ENCODE measurements at regions of chr10 and their contacts with region 1.

Region 1: DNA sequence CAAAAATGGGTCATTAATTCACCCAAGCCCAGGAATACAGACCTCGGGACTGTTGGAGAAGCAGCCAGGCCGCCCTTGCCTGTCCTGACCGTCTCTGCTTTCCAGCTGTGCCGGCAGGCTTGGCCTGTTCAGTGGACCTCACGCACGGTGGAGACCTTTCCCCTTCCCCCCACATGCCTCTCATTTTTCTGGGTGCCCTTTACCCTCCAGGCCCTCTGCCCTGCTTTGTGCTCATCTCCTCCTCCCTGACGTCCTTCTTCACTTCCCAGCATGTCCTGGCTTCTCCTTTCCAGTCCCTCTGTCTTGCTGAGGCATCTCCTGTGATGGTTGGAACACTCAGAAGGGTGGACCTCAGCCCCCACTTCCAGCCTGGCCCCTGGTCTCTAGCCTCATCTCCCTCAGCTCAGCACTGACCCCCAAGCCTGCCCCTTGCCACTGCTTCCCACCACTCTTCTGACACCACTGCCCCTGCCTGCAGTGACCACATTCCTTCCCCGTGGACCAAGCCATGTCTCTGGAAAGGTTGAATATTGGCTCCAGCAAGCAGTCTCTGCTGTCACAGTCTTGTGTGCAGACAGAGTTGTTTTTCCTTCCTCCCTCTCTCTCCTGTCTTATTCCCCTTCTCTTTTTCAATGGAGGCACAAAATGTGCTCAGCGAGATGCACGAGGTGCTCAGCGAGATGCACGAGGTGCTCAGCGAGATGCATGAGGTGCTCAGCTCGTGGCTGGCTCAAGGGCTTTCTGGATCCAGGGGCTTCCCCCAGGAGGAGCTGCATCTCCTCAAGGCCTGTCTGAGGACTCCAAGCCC is 14.9 kb downstream of the BAG3 start:
- DNase-seq: no peak
- H3K4me3 ChIP-seq: no peak overlapping the region
- H3K27me3 ChIP-seq: no peaks in the 10 kb centered on the region
- CTCF ChIP-seq: no peak

Region 2: GRCh38 chr10:119466655-119467054 is 199.4 kb before region 1 on chr10:
- CTCF ChIA-PET with region 1: no interaction called
- POLR2A ChIA-PET with region 1: no interaction called
- DNase-seq: no peak
- H3K4me3 ChIP-seq: no peak overlapping the region
- H3K27me3 ChIP-seq: peaks cover 8% of the 10 kb centered on the region
- CTCF ChIP-seq: no peak

Region 3: DNA sequence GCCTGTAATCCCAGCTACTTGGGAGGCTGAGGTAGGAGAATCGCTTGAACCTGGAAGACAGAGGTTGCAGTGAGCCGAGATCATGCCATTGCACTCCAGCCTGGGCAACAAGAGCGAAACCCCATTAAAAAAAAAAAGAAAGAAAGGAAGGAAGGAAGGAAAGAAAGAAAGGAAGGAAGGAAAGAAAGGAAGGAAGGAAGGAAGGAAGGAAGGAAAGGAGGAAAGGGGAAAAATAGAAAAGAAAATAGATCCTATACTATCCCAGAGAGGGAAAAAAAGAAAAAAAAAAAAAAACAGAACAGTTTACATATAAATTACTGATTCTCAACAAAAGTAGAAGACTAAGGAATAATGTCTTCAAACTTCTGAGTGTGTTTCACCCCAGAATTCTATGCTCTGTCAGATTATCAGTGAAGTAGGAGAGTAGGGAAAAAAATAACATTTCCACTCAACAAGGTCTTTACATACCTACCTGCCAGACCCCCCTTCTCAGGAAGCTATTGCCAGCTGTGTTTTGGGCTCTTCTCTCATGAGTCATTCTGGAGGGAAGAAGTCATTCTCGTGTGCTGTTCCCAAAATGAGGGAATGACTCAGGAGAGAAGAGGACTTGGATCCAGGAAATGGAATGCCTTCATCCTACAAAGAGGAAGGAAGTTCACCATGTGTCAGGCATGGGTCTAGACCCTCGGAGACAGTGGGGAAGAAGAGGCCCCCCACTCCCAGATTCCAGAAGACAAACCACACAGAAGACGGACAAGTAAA is 144.5 kb before region 1 on chr10:
- CTCF ChIA-PET with region 1: no interaction called
- POLR2A ChIA-PET with region 1: no interaction called
- DNase-seq: peak; percentile 60
- H3K4me3 ChIP-seq: no peak overlapping the region
- H3K27me3 ChIP-seq: no peaks in the 10 kb centered on the region
- CTCF ChIP-seq: no peak

Region 4: DNA sequence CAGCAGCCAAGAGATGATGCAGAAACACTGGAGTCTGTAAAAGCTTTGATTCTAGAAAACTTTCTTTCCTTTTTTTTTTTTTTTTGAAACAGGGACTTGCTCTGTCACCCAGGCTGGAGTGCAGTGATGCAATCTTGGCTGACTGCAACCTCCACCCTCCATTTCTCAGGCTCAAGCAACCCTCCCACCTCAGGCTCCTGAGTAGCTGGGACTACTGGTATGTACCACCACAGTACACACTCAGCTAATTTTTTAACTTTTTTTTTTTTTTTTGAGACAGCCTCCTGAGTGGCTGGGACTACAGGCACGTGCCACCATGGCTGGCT is 31.9 kb before region 1 on chr10:
- CTCF ChIA-PET with region 1: no interaction called
- POLR2A ChIA-PET with region 1: interaction called, 14 read pairs
- DNase-seq: no peak
- H3K4me3 ChIP-seq: no peak overlapping the region
- H3K27me3 ChIP-seq: no peaks in the 10 kb centered on the region
- CTCF ChIP-seq: no peak